ENCODE measurements at regions of chr6 and their contacts with region 1.

Region 1: GRCh38 chr6:166397849-166398248 is 15.1 kb upstream of the MPC1 start:
- DNase-seq: no peak
- H3K4me3 ChIP-seq: no peak overlapping the region
- H3K27ac ChIP-seq: no peak overlapping the region
- H3K4me1 ChIP-seq: peaks cover 0 to 7% (median 5%) of the 10 kb centered on the region in 6 donors
- H3K27me3 ChIP-seq: peaks cover 0 to 30% (median 0%) of the 10 kb centered on the region in 7 donors
- CTCF ChIP-seq: no peak
- POLR2A ChIP-seq: no peak

Region 2: DNA sequence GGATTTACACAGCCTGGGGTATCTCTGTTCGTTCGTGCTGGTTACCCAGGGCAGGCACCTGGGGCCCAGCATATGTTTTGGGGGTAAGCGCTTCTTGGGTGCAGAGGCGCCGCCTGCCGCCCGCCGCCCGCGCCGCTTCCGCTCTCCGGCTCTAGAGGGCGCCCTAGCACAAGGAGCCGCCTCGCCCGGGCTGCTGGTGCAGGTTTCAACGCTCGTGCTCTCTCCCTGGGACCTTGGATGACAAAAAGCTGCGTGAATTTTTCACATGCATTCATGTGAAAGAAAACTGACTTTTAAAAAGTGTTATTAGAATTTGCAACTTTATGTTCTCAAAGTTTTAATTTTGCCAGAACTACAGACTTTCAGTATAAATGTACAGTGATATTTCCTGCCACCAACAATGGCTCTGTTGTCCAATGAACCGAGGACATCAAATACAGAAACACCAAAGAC is 122.1 kb before region 1 on chr6:
- intact Hi-C with region 1: loop called (anchors 2 kb)
- DNase-seq: peak; percentile 96
- H3K4me3 ChIP-seq: no peak overlapping the region
- H3K27ac ChIP-seq: no peak overlapping the region
- H3K4me1 ChIP-seq: peaks cover 6 to 9% (median 8%) of the 10 kb centered on the region in 6 donors
- H3K27me3 ChIP-seq: peaks cover 0 to 23% (median 0%) of the 10 kb centered on the region in 7 donors
- CTCF ChIP-seq: peak; percentile 87 to 100 (median 99)
- POLR2A ChIP-seq: no peak

Measured in spleen (tissue), 13 donors.